ENCODE measurements at regions of chr10 and their contacts with region 1.

Region 1: DNA sequence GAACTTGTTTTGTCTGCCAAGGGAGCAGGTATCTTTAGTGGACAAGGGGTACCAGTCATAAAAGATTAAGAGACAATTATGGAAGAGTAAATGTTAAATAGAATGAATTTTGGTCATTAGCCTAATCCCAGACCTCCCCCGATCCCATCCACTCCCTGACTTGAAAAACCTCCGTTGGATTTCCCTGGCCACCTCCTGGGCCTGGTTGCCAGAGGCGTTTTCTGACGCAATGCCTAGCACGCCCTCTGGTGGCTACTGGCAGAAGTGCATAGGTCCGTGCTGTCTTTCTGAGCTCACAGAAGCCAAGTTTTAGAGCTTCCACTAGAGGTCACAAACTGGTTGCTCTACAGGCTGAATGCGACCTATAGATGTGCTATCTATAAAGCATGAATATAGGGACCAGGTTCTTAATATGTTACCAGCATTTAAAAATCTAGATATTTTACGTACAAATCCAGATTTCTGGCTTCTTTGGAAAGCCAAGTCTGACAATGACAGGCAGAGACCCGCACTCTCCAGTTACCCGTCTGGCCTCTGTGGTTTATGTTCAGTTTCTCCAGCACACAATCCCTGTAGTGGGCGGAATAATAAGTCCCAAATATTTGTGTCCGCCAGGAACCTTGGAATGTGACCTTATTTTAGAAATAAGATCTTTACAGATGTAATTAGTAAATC is 39.8 kb downstream of the SPOCK2 start:
- DNase-seq: peak; percentile 89 to 95 (median 93)
- ATAC-seq: peak; percentile 99
- H3K4me3 ChIP-seq: no peak overlapping the region
- H3K27ac ChIP-seq: no peak overlapping the region
- H3K4me1 ChIP-seq: peaks cover 0 to 3% of the 10 kb centered on the region in 2 donors
- H3K27me3 ChIP-seq: no peaks in the 10 kb centered on the region
- CTCF ChIP-seq: peak; percentile 97 to 99

Region 2: DNA sequence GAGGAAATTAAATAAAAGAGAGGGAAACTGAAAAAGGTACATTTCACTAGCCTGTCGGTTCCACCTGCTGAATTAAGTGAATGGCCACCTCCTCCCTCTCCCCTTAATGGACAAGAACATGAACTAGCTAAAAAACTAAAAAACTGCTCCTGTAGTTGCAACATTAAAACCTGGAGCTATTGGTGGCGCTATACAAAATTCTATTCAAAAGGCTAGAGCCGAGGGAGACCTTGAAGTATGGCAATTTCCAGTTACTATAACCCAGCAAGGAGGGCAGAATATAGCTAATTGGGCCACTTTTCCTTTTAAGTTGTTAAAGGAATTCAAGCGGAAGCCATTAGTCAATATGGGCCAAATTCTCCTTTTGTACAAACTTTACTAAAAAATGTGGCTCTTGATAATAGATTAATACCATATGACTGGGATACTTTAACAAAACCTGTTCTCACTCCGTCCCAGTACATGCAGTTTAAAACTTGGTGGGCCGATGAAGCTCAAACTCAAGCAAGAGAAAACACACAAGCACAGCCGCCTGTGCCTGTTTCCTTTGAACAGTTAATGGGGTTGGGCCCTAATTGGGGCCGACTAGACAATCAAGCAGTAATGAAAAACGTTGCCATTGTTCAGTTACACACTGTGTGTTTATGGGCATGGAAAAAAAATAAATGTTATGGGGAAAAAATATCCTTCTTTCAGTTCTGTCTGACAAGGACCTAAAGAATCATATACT is 90.9 kb before region 1 on chr10:
- intact Hi-C with region 1: loop called in 1 of 2 experiments (anchors 5 kb)
- DNase-seq: no peak
- ATAC-seq: no peak
- H3K4me3 ChIP-seq: no peak overlapping the region
- H3K27ac ChIP-seq: no peak overlapping the region
- H3K4me1 ChIP-seq: peaks cover 0 to 7% of the 10 kb centered on the region in 2 donors
- H3K27me3 ChIP-seq: peaks cover 0 to 7% of the 10 kb centered on the region in 2 donors
- CTCF ChIP-seq: no peak

Region 3: DNA sequence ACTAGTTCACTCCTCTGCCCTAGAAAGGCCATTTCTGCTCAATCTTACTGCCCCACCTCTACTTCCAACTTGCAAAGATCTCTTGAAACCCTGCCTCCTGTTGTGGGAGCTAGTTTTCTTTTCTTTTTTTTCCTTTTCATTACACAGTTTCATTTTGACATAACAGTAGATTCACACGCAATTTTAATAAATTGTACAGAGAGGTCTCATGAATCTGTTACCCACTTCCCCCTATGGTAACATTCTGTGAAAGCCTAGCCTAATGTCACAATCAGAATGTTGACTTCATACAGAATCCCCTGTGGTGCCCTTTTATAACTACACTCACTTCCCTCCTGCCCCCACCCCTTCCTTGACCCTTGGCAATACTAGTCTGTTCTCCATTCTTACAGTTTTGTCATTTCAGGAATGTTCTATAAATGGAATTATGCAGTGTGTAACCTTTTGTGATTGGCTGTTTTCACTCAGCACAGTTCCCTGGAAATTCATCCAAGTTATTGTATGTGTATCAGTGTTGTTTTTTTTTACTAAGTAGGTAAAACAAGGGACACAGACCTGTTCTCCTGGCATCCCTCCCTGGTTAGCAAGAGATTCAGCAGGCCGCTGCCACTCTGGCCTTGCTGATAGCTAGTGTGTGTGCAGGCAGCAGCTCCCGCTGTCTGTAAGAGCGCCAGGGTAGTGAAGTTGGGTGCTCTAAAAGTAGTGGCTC is 62.9 kb before region 1 on chr10:
- intact Hi-C with region 1: no loop called
- DNase-seq: no peak
- ATAC-seq: peak; percentile 59
- H3K4me3 ChIP-seq: no peak overlapping the region
- H3K27ac ChIP-seq: peak overlapping the region; percentile 16 to 22
- H3K4me1 ChIP-seq: peaks cover 16 to 46% of the 10 kb centered on the region in 2 donors
- H3K27me3 ChIP-seq: no peaks in the 10 kb centered on the region
- CTCF ChIP-seq: no peak

Region 4: DNA sequence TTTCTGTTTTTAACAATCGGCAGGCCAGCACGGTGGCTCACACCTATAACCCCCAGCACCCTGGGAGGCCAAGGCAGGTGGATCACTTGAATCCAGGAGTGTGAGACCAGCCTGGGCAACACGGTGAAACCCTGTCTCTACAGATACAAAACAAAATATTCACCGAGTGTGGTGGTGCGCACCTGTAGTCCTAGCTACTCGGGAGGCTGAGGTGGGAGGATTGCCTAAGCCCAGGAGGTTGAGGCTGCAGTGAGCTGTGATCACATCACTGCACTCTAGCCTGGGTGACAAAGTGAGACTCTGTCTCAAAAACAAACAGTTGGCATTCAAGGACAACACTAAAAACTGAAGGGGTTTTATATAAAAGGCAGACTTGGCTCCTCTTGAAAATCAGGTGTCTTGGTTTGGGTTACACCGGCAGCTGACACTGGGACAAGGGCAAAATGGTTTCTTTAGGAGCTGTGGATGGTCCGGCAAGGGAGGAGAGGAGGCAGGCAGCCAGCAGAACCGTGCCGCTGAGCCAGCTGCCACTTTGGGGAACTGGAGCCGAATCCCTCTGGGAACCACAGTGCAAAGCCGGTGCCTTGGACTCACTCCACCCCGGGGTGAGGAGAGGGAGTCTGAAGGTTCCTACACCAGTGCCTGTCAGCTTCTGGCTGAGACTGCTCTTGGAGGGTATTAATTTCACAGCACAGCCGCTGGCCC is 31.8 kb before region 1 on chr10:
- intact Hi-C with region 1: no loop called
- DNase-seq: no peak
- ATAC-seq: no peak
- H3K4me3 ChIP-seq: no peak overlapping the region
- H3K27ac ChIP-seq: no peak overlapping the region
- H3K4me1 ChIP-seq: peaks cover 0 to 6% of the 10 kb centered on the region in 2 donors
- H3K27me3 ChIP-seq: no peaks in the 10 kb centered on the region
- CTCF ChIP-seq: no peak

Measured in left lung (tissue), 14 donors.